Activated CD4-positive, alpha-beta memory T cell treated with anti-CD3 and anti-CD28 coated beads for 36 hours (primary cell): ENCODE measurements at regions of chr17 and their contacts with region 1.

Region 1: GRCh38 chr17:3636154-3636907 is at the starts of genes CTNS and SHPK:
- DNase-seq: peak; percentile 96
- H3K4me3 Mint-ChIP-seq: peak within 1 kb of the TSS; percentile 94
- H3K27ac Mint-ChIP-seq: peak within 1 kb of the TSS; percentile 96
- H3K4me1 Mint-ChIP-seq: peaks cover 38% of the 10 kb centered on the region
- H3K27me3 Mint-ChIP-seq: no peaks in the 10 kb centered on the region
- total RNA-seq, gene CTNS: 17.7 to 19.8 TPM
- total RNA-seq, gene SHPK: 12.3 to 12.4 TPM

Region 2: GRCh38 chr17:3213587-3213986 is 422.7 kb before region 1 on chr17:
- CTCF ChIA-PET with region 1: no interaction called
- POLR2A ChIA-PET with region 1: no interaction called
- intact Hi-C with region 1: no loop called
- DNase-seq: no peak
- H3K4me3 Mint-ChIP-seq: no peak overlapping the region
- H3K27ac Mint-ChIP-seq: no peak overlapping the region
- H3K4me1 Mint-ChIP-seq: no peaks in the 10 kb centered on the region
- H3K27me3 Mint-ChIP-seq: peaks cover 16% of the 10 kb centered on the region

Region 3: GRCh38 chr17:3558603-3559269 is 77.6 kb before region 1 on chr17:
- CTCF ChIA-PET with region 1: no interaction called
- POLR2A ChIA-PET with region 1: interaction called, 4 read pairs
- intact Hi-C with region 1: loop called (anchors 5 kb)
- DNase-seq: peak; percentile 85
- H3K4me3 Mint-ChIP-seq: no peak overlapping the region
- H3K27ac Mint-ChIP-seq: peak overlapping the region; percentile 77
- H3K4me1 Mint-ChIP-seq: peaks cover 35% of the 10 kb centered on the region
- H3K27me3 Mint-ChIP-seq: peaks cover 2% of the 10 kb centered on the region

Region 4: DNA sequence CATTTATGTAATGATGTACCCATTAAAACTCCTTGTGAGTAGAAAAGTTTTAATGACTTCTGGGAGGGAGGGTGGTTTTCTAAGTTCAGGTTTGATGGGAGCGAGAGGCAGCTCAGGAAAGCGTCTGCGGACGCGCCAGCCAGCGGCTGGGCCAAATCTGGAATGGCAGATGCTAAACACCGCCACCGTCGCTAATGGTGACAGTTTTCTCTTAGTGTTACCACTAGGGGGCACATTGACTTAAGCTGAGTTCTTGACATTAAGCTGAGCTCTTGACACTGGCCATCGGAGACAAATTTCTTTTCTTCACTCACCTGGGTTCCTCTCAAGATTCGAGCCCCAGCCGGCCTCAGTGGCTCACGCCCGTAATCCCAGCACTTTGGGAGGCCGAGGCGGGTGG is 33.8 kb before region 1 on chr17:
- CTCF ChIA-PET with region 1: interaction called, 15 read pairs
- POLR2A ChIA-PET with region 1: no interaction called
- intact Hi-C with region 1: no loop called
- DNase-seq: peak; percentile 40
- H3K4me3 Mint-ChIP-seq: no peak overlapping the region
- H3K27ac Mint-ChIP-seq: no peak overlapping the region
- H3K4me1 Mint-ChIP-seq: no peaks in the 10 kb centered on the region
- H3K27me3 Mint-ChIP-seq: no peaks in the 10 kb centered on the region

Region 5: GRCh38 chr17:3647769-3648555 is 11.6 kb after region 1 on chr17:
- CTCF ChIA-PET with region 1: interaction called, 25 read pairs
- POLR2A ChIA-PET with region 1: interaction called, 6 read pairs
- intact Hi-C with region 1: no loop called
- DNase-seq: peak; percentile 71
- H3K4me3 Mint-ChIP-seq: no peak overlapping the region
- H3K27ac Mint-ChIP-seq: no peak overlapping the region
- H3K4me1 Mint-ChIP-seq: peaks cover 8% of the 10 kb centered on the region
- H3K27me3 Mint-ChIP-seq: no peaks in the 10 kb centered on the region

Region 6: DNA sequence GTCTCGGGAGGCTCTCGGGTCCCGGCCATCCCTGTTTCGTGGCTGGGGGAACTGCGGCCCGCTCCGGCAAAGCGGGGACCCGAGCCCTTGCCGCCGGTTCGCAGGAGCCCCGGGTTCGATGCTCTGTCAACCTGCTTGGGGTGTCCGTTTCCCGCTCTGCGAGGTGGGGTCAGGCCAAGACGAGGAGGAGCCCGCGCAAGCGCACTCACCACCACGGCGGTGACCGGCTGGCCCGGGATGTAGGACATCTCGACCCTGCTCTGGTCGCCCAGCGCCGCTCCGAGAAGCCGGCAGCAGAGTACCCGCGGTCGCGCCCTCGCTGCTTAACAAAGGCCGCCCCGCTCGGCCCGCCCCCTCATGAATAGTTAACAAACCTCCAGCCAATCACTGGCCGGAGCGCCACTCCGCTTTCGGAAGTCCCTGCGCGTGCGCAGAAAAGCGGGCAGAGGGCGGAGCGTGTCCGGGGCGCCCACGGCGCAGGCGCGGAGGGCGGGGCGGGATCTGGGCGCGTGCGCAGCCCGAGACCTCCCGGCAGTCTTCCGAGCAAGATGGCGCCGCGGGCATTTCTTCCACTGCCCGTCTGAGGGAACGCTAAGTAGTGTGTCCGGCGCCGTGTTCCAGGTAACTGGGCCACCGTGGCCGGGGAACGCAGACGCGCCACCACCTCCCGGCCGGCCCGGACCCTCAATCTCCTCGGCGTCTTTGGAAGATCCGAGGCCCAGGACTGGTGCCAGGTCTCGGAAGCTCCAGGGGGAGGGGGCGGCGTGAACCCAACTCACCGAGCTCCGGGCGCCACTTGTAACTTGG is 32.2 kb after region 1 on chr17 and contains the starts of genes EMC6 and TAX1BP3:
- CTCF ChIA-PET with region 1: interaction called, 3 read pairs
- POLR2A ChIA-PET with region 1: interaction called, 3 read pairs
- intact Hi-C with region 1: loop called (anchors 2 kb)
- DNase-seq: peak; percentile 99
- H3K4me3 Mint-ChIP-seq: peak within 1 kb of the TSS; percentile 94
- H3K27ac Mint-ChIP-seq: peak within 1 kb of the TSS; percentile 72
- H3K4me1 Mint-ChIP-seq: peaks cover 17% of the 10 kb centered on the region
- H3K27me3 Mint-ChIP-seq: no peaks in the 10 kb centered on the region
- total RNA-seq, gene EMC6: 49.3 to 55.4 TPM
- total RNA-seq, gene TAX1BP3: 23.7 to 24.5 TPM

Region 7: GRCh38 chr17:3710951-3711383 is 74.6 kb after region 1 on chr17:
- CTCF ChIA-PET with region 1: no interaction called
- POLR2A ChIA-PET with region 1: interaction called, 3 read pairs
- intact Hi-C with region 1: loop called (anchors 1 kb)
- DNase-seq: peak; percentile 85
- H3K4me3 Mint-ChIP-seq: peak overlapping the region; percentile 49
- H3K27ac Mint-ChIP-seq: peak overlapping the region; percentile 83
- H3K4me1 Mint-ChIP-seq: peaks cover 48% of the 10 kb centered on the region
- H3K27me3 Mint-ChIP-seq: no peaks in the 10 kb centered on the region

Region 8: DNA sequence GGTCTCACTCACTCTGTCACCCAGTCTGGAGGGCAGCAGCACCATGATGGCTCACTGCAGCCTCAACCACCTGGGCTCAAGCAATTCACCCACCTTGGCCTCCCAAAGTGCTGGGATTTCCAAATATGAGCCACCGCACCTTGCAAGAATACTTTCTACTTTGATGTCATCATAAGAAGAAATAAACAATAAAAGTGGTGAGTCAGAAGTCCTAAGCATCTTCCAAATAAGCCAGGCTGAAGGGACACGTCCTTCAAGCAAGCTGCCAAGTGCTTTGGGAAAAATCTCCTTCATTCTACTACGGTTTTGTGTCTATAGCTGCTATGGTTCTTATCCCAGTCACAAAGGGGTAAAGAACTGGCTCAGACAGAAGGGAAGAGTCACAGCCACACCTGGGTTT is 107.7 kb after region 1 on chr17:
- CTCF ChIA-PET with region 1: no interaction called
- POLR2A ChIA-PET with region 1: no interaction called
- intact Hi-C with region 1: no loop called
- DNase-seq: no peak
- H3K4me3 Mint-ChIP-seq: no peak overlapping the region
- H3K27ac Mint-ChIP-seq: no peak overlapping the region
- H3K4me1 Mint-ChIP-seq: peaks cover 24% of the 10 kb centered on the region
- H3K27me3 Mint-ChIP-seq: no peaks in the 10 kb centered on the region